CD4-positive, alpha-beta T cell (primary cell): ENCODE measurements at regions of chr6 and their contacts with region 1.

Region 1: GRCh38 chr6:141335477-141336273 is 797.0 kb upstream of the GJE1 start:
- DNase-seq: no peak
- ATAC-seq: no peak
- H3K4me3 ChIP-seq: no peak overlapping the region
- H3K4me3 Mint-ChIP-seq: no peak overlapping the region
- H3K27ac ChIP-seq: no peak overlapping the region
- H3K27ac Mint-ChIP-seq: no peak overlapping the region
- H3K4me1 ChIP-seq: no peaks in the 10 kb centered on the region
- H3K4me1 Mint-ChIP-seq: no peaks in the 10 kb centered on the region
- H3K27me3 ChIP-seq: no peaks in the 10 kb centered on the region
- H3K27me3 Mint-ChIP-seq: no peaks in the 10 kb centered on the region
- CTCF ChIP-seq: no peak

Region 2: DNA sequence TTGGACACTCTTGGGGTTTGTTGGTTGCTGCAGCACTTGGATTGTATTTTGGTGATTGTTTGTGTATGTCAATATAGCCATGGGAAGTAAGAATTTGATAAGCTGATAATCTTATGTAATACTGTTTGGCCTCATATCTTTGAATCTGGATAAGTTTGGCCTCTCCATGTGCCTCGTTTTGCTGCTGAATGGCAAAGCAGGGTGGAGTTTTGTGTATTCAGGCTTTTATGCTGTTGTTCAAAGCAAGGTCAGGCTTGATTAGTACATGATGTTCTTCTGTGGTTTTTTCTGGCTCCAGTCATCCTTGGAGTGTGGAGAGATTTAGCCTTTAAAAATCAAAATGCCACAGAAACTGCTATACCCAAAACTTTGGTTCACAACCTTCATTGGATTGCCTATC is 68.1 kb after region 1 on chr6:
- CTCF ChIA-PET with region 1: no interaction called
- POLR2A ChIA-PET with region 1: no interaction called
- intact Hi-C with region 1: loop called in 1 of 2 experiments (anchors 2 kb)
- DNase-seq: no peak
- ATAC-seq: no peak
- H3K4me3 ChIP-seq: no peak overlapping the region
- H3K4me3 Mint-ChIP-seq: no peak overlapping the region
- H3K27ac ChIP-seq: no peak overlapping the region
- H3K27ac Mint-ChIP-seq: no peak overlapping the region
- H3K4me1 ChIP-seq: peaks cover 7% of the 10 kb centered on the region
- H3K4me1 Mint-ChIP-seq: peaks cover 8% of the 10 kb centered on the region
- H3K27me3 ChIP-seq: no peaks in the 10 kb centered on the region
- H3K27me3 Mint-ChIP-seq: no peaks in the 10 kb centered on the region
- CTCF ChIP-seq: no peak

Region 3: GRCh38 chr6:141531040-141531439 is 195.4 kb after region 1 on chr6:
- CTCF ChIA-PET with region 1: no interaction called
- POLR2A ChIA-PET with region 1: no interaction called
- intact Hi-C with region 1: no loop called
- DNase-seq: no peak
- ATAC-seq: no peak
- H3K4me3 ChIP-seq: no peak overlapping the region
- H3K4me3 Mint-ChIP-seq: no peak overlapping the region
- H3K27ac ChIP-seq: no peak overlapping the region
- H3K27ac Mint-ChIP-seq: no peak overlapping the region
- H3K4me1 ChIP-seq: no peaks in the 10 kb centered on the region
- H3K4me1 Mint-ChIP-seq: no peaks in the 10 kb centered on the region
- H3K27me3 ChIP-seq: no peaks in the 10 kb centered on the region
- H3K27me3 Mint-ChIP-seq: no peaks in the 10 kb centered on the region
- CTCF ChIP-seq: no peak